CD4-positive, alpha-beta T cell (primary cell): ENCODE measurements at regions of chr2 and their contacts with region 1.

Region 1: DNA sequence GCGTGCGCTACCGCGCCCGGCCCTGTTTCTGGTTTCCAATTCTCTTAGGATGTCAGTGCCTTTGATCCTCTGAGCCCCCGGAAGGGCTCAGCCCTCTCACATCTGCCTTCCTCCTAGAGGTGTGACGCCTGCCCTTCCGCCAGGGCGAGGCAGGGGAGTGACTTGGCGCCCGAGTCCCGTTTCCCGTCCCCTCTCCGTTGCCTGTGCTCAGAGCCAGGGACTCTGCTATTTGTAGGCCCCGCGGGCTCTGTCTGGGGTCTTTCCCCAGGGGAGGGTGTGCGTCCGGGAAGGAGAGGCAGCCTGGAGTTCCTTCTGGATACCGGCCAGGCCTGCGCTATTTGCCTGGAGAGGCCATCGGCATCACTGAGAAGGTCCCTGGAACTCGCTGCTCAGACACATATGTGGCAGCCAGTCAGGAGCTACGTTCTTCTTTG is 103.7 kb upstream of the TAF1B start:
- DNase-seq: peak; percentile 22 to 77 (median 52)
- ATAC-seq: peak; percentile 80
- H3K4me3 ChIP-seq: peak overlapping the region; percentile 42
- H3K4me3 Mint-ChIP-seq: peak overlapping the region; percentile 89
- H3K27ac ChIP-seq: peak overlapping the region in 1 of 2 donors; percentile 67
- H3K27ac Mint-ChIP-seq: peak overlapping the region; percentile 90
- H3K4me1 ChIP-seq: peaks cover 46% of the 10 kb centered on the region
- H3K4me1 Mint-ChIP-seq: peaks cover 49% of the 10 kb centered on the region
- H3K27me3 ChIP-seq: no peaks in the 10 kb centered on the region
- H3K27me3 Mint-ChIP-seq: no peaks in the 10 kb centered on the region
- CTCF ChIP-seq: no peak

Region 2: DNA sequence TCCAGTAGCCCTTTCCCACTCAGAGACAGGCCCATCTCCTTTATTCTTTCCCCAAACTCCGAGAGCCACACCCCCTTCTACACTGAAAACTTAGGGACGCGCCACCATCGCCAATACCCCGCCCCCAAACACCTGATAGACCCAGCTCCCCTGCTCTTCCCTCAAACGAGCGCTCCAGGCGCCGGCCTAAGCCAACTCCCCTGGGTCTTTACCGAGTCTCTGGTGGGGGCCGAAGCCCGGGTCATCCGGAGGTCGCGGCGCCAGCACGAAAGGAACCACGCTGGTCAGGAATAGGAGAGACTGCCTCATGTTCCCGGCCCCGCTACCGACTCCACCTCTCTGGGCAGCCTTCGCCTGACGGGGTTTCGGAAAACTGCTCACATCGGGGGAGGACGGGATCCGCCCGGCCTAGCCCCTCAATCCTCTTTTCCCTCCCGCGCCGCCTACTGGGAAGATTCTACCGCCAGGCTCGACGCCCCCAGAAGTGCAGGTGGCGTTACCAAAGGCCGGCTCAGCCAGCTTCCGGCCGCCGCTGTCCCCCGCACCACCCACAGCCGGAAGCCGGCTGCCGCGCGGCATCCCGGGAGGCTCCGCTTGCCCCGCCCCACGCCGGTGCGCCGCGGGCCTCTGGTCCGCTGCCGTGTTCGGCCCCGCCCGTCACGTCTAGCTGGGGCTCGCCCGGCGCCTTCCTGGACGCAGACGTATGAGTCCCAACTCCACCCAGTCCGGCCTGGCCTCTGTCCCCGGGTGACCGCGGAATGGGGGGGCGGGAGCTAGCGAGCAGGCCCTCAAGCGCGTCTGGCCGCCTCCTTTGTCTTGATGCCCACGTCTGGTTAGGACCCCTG is 184.0 kb before region 1 on chr2 and contains the start of gene ADAM17:
- CTCF ChIA-PET with region 1: no interaction called
- POLR2A ChIA-PET with region 1: interaction called, 12 read pairs
- intact Hi-C with region 1: loop called (anchors 5 to 10 kb)
- DNase-seq: peak; percentile 60 to 93 (median 80)
- ATAC-seq: peak; percentile 86
- H3K4me3 ChIP-seq: peak within 1 kb of the TSS; percentile 95
- H3K4me3 Mint-ChIP-seq: peak within 1 kb of the TSS; percentile 95
- H3K27ac ChIP-seq: peak within 1 kb of the TSS; percentile 93 to 97
- H3K27ac Mint-ChIP-seq: peak within 1 kb of the TSS; percentile 86
- H3K4me1 ChIP-seq: peaks cover 29% of the 10 kb centered on the region
- H3K4me1 Mint-ChIP-seq: peaks cover 58% of the 10 kb centered on the region
- H3K27me3 ChIP-seq: no peaks in the 10 kb centered on the region
- H3K27me3 Mint-ChIP-seq: no peaks in the 10 kb centered on the region
- CTCF ChIP-seq: peak; percentile 15
- total RNA-seq, gene ADAM17: 21.4 to 21.6 TPM

Region 3: GRCh38 chr2:9601397-9601796 is 138.2 kb before region 1 on chr2:
- CTCF ChIA-PET with region 1: no interaction called
- POLR2A ChIA-PET with region 1: no interaction called
- intact Hi-C with region 1: loop called in 1 of 2 experiments (anchors 10 kb)
- DNase-seq: no peak
- ATAC-seq: no peak
- H3K4me3 ChIP-seq: no peak overlapping the region
- H3K4me3 Mint-ChIP-seq: no peak overlapping the region
- H3K27ac ChIP-seq: no peak overlapping the region
- H3K27ac Mint-ChIP-seq: no peak overlapping the region
- H3K4me1 ChIP-seq: peaks cover 8% of the 10 kb centered on the region
- H3K4me1 Mint-ChIP-seq: peaks cover 32% of the 10 kb centered on the region
- H3K27me3 ChIP-seq: no peaks in the 10 kb centered on the region
- H3K27me3 Mint-ChIP-seq: no peaks in the 10 kb centered on the region
- CTCF ChIP-seq: no peak

Region 4: GRCh38 chr2:9753276-9753600 is 13.7 kb after region 1 on chr2:
- CTCF ChIA-PET with region 1: no interaction called
- POLR2A ChIA-PET with region 1: interaction called, 14 read pairs
- intact Hi-C with region 1: no loop called
- DNase-seq: peak in 12 of 14 experiments; percentile 19 to 80 (median 32)
- ATAC-seq: peak; percentile 69
- H3K4me3 ChIP-seq: peak overlapping the region; percentile 53
- H3K4me3 Mint-ChIP-seq: peak overlapping the region; percentile 90
- H3K27ac ChIP-seq: peak overlapping the region in 1 of 2 donors; percentile 80
- H3K27ac Mint-ChIP-seq: peak overlapping the region; percentile 82
- H3K4me1 ChIP-seq: peaks cover 51% of the 10 kb centered on the region
- H3K4me1 Mint-ChIP-seq: peaks cover 47% of the 10 kb centered on the region
- H3K27me3 ChIP-seq: peaks cover 0 to 4% of the 10 kb centered on the region in 2 experiments
- H3K27me3 Mint-ChIP-seq: peaks cover 11% of the 10 kb centered on the region
- CTCF ChIP-seq: no peak